Activated CD4-positive, alpha-beta memory T cell treated with anti-CD3 and anti-CD28 coated beads for 36 hours (primary cell): ENCODE measurements at regions of chr15 and their contacts with region 1.

Region 1: GRCh38 chr15:78049691-78050440 is 27.6 kb downstream of the TBC1D2B start:
- DNase-seq: peak; percentile 83
- H3K4me3 Mint-ChIP-seq: peak overlapping the region; percentile 30
- H3K27ac Mint-ChIP-seq: peak overlapping the region; percentile 92
- H3K4me1 Mint-ChIP-seq: peaks cover 99% of the 10 kb centered on the region
- H3K27me3 Mint-ChIP-seq: no peaks in the 10 kb centered on the region

Region 2: GRCh38 chr15:78061963-78062435 is 12.1 kb after region 1 on chr15:
- CTCF ChIA-PET with region 1: interaction called, 40 read pairs
- POLR2A ChIA-PET with region 1: interaction called, 47 read pairs
- intact Hi-C with region 1: loop called (anchors 1 kb)
- DNase-seq: peak; percentile 61
- H3K4me3 Mint-ChIP-seq: peak overlapping the region; percentile 50
- H3K27ac Mint-ChIP-seq: peak overlapping the region; percentile 69
- H3K4me1 Mint-ChIP-seq: peaks cover 41% of the 10 kb centered on the region
- H3K27me3 Mint-ChIP-seq: no peaks in the 10 kb centered on the region

Region 3: GRCh38 chr15:78067328-78068228 is 17.7 kb after region 1 on chr15:
- CTCF ChIA-PET with region 1: interaction called, 40 read pairs
- POLR2A ChIA-PET with region 1: interaction called, 47 read pairs
- intact Hi-C with region 1: loop called (anchors 1 kb)
- DNase-seq: no peak
- H3K4me3 Mint-ChIP-seq: no peak overlapping the region
- H3K27ac Mint-ChIP-seq: no peak overlapping the region
- H3K4me1 Mint-ChIP-seq: peaks cover 16% of the 10 kb centered on the region
- H3K27me3 Mint-ChIP-seq: no peaks in the 10 kb centered on the region

Region 4: DNA sequence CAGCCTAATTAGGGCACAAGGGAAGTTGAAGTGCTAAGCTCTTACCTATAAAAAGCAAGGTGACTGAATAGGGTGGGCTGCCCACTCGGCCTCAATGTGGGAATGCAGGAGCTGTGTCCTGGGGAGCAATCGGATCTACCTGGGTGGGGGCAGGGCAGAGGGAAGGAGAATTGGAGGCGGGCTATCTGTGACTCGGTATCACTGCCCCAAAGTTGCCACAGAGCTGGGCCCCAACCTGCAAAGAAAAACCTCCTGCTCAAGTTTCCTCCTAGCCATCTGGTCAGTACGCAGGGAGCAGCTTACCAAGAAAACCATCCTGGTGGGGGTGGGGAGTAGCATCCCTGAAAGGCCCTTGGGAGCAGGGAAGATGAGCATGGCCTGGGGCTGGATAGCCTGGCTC is 70.7 kb after region 1 on chr15:
- CTCF ChIA-PET with region 1: no interaction called
- POLR2A ChIA-PET with region 1: no interaction called
- intact Hi-C with region 1: no loop called
- DNase-seq: no peak
- H3K4me3 Mint-ChIP-seq: no peak overlapping the region
- H3K27ac Mint-ChIP-seq: no peak overlapping the region
- H3K4me1 Mint-ChIP-seq: no peaks in the 10 kb centered on the region
- H3K27me3 Mint-ChIP-seq: no peaks in the 10 kb centered on the region

Region 5: DNA sequence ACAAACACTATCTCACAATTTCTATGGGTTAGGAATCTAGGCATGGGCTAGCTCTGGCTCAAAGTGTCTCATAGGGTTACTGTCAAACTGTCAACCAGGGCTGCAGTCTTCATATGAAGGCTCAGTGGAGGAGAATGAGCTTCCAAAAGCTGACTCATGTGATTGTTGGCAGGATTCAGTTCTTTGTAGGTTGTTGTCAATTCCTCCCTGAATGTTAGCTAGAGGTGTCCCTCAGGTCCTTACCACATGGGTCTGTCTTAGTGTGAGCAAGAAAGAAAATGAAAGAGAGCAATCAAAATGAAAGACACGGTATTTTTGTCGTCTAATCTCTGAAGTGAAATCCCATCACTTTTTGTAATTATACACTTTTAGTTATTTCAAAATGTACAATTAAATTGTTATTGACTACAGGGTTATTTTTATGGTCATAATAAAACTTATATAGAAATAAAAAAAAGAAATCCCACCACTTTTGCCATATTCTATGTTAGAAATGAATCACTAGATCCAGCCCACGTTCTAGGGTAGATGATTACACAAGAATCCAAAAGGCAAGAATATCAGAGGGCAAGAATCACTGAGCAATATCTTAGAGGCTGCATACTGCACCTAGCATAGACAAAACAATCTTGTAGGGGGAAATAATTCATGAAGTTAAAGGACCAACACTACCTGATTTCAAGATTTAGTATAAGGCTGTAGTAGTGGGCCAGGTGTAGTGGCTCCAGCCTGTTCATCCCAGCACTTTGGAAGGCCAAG is 176.1 kb after region 1 on chr15:
- CTCF ChIA-PET with region 1: no interaction called
- POLR2A ChIA-PET with region 1: interaction called, 3 read pairs
- intact Hi-C with region 1: loop called (anchors 5 kb)
- DNase-seq: peak; percentile 39
- H3K4me3 Mint-ChIP-seq: no peak overlapping the region
- H3K27ac Mint-ChIP-seq: no peak overlapping the region
- H3K4me1 Mint-ChIP-seq: peaks cover 21% of the 10 kb centered on the region
- H3K27me3 Mint-ChIP-seq: no peaks in the 10 kb centered on the region